Activated CD4-positive, alpha-beta memory T cell treated with anti-CD3 and anti-CD28 coated beads for 36 hours (primary cell): ENCODE measurements at regions of chr15 and their contacts with region 1.

Region 1: GRCh38 chr15:57561041-57561711 is 30.5 kb upstream of the MYZAP start:
- DNase-seq: peak; percentile 73
- H3K4me3 Mint-ChIP-seq: peak overlapping the region; percentile 5
- H3K27ac Mint-ChIP-seq: peak overlapping the region; percentile 74
- H3K4me1 Mint-ChIP-seq: peaks cover 39% of the 10 kb centered on the region
- H3K27me3 Mint-ChIP-seq: peaks cover 2% of the 10 kb centered on the region

Region 2: GRCh38 chr15:57586661-57587424 is 25.7 kb after region 1 on chr15:
- CTCF ChIA-PET with region 1: interaction called, 11 read pairs
- POLR2A ChIA-PET with region 1: no interaction called
- intact Hi-C with region 1: loop called (anchors 1 kb)
- DNase-seq: no peak
- H3K4me3 Mint-ChIP-seq: no peak overlapping the region
- H3K27ac Mint-ChIP-seq: peak overlapping the region; percentile 26
- H3K4me1 Mint-ChIP-seq: peaks cover 31% of the 10 kb centered on the region
- H3K27me3 Mint-ChIP-seq: peaks cover 16% of the 10 kb centered on the region

Region 3: GRCh38 chr15:57611938-57612337 is 50.8 kb after region 1 on chr15:
- CTCF ChIA-PET with region 1: interaction called, 13 read pairs
- POLR2A ChIA-PET with region 1: no interaction called
- intact Hi-C with region 1: loop called (anchors 1 kb)
- DNase-seq: no peak
- H3K4me3 Mint-ChIP-seq: no peak overlapping the region
- H3K27ac Mint-ChIP-seq: no peak overlapping the region
- H3K4me1 Mint-ChIP-seq: no peaks in the 10 kb centered on the region
- H3K27me3 Mint-ChIP-seq: no peaks in the 10 kb centered on the region

Region 4: DNA sequence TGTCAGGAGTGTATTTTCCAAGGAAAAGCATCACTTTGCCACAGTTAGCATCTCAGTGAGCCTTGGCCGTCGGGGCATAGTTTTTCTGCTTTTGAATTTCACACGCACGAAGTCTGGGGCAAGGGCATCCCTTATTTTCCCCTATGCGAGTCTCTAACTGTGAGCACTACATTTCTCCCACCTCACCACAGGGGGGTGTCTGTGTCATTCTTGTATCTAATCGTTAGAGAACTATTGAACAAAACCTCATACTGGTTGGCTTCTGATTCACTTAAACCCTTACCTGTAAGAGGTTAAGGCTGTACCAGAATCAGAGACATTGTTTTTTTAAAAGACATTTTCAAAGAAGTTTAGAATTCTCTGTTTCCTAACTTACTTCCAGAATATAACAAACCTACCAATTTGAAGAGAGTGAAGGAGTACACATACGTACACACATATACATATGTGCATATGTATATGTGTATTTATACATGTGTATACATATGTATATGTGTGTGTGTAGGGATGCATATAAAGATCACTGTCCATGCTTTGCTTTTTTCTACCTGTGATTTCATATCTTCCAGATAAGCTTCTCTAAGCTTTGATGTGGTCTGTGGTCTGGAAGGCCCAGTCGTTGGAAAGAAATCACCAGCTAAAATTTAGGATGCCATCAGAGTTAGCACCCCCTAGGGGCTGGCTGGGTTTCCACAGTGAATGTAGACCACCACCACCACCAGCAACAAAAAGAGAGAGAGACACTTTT is 79.9 kb after region 1 on chr15:
- CTCF ChIA-PET with region 1: interaction called, 8 read pairs
- POLR2A ChIA-PET with region 1: no interaction called
- intact Hi-C with region 1: loop called (anchors 5 kb)
- DNase-seq: peak; percentile 29
- H3K4me3 Mint-ChIP-seq: no peak overlapping the region
- H3K27ac Mint-ChIP-seq: no peak overlapping the region
- H3K4me1 Mint-ChIP-seq: peaks cover 6% of the 10 kb centered on the region
- H3K27me3 Mint-ChIP-seq: peaks cover 3% of the 10 kb centered on the region

Region 5: GRCh38 chr15:58002338-58003126 is 441.4 kb after region 1 on chr15:
- CTCF ChIA-PET with region 1: no interaction called
- POLR2A ChIA-PET with region 1: no interaction called
- intact Hi-C with region 1: no loop called
- DNase-seq: no peak
- H3K4me3 Mint-ChIP-seq: no peak overlapping the region
- H3K27ac Mint-ChIP-seq: no peak overlapping the region
- H3K4me1 Mint-ChIP-seq: no peaks in the 10 kb centered on the region
- H3K27me3 Mint-ChIP-seq: peaks cover 7% of the 10 kb centered on the region